Activated CD4-positive, alpha-beta T cell treated with anti-CD3 and anti-CD28 coated beads for 36 hours (primary cell): ENCODE measurements at regions of chr11 and their contacts with region 1.

Region 1: GRCh38 chr11:125887373-125888324 is at the start of gene HYLS1:
- DNase-seq: peak; percentile 97
- ATAC-seq: peak; percentile 90
- H3K4me3 Mint-ChIP-seq: peak within 1 kb of the TSS; percentile 78
- H3K27ac Mint-ChIP-seq: peak within 1 kb of the TSS; percentile 87
- H3K4me1 Mint-ChIP-seq: peaks cover 41% of the 10 kb centered on the region
- H3K27me3 Mint-ChIP-seq: no peaks in the 10 kb centered on the region
- total RNA-seq, gene HYLS1: 7.2 to 9.3 TPM

Region 2: GRCh38 chr11:124875943-124876817 is 1011.5 kb before region 1 on chr11:
- CTCF ChIA-PET with region 1: no interaction called
- POLR2A ChIA-PET with region 1: no interaction called
- intact Hi-C with region 1: loop called in 1 of 2 experiments (anchors 5 kb)
- DNase-seq: peak; percentile 88
- ATAC-seq: peak; percentile 98
- H3K4me3 Mint-ChIP-seq: peak overlapping the region; percentile 77
- H3K27ac Mint-ChIP-seq: peak overlapping the region; percentile 58
- H3K4me1 Mint-ChIP-seq: peaks cover 16% of the 10 kb centered on the region
- H3K27me3 Mint-ChIP-seq: peaks cover 27% of the 10 kb centered on the region

Region 3: DNA sequence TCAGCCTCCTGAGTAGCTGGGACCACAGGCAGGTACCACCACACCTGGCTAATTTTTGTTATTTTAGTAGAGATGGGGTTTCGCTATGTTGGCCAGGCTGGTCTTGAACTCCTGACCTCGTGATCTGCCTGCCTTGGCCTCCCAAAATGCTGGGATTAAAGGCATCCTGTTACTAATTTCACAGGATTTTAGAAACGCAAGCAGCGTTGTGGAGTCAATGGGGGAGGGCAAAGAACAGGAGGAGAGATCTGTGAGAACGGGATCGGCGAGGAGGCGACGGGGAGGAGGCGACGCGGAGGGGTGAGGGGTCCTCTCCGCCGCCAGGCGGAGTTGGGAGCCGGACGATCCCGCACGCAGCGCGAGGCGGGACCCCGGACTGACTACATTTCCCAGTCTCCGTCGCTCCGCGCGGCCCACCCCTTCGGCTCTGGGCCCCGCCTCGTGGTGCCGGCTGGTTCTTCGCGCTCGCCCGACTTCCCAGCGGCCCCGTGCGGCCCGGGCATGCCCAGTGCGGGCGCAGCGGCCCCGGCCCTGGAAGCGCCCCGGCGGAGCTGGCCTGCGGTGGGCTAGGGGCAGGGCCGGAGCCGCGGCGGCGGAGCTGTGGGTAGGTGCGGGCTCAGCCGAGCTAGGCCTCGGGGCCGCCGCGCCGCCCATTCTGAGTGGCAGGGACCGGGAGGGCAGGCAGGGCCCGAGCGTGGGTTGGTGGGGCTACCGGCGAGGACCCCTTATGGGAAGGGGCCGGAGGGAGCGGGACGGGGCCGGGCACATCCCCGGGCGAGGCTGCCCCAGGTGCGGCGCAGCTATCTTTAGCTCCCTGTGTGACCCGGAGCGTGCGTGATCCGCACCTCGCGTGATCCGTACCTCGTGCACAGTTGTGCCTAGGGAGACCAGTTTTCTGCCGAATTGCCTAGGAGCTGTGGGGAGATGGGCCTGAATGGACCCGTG is 318.4 kb before region 1 on chr11 and contains the start of gene EI24:
- CTCF ChIA-PET with region 1: no interaction called
- POLR2A ChIA-PET with region 1: interaction called, 12 read pairs
- intact Hi-C with region 1: loop called in 1 of 2 experiments (anchors 1 kb)
- DNase-seq: peak; percentile 95
- ATAC-seq: peak; percentile 95
- H3K4me3 Mint-ChIP-seq: peak within 1 kb of the TSS; percentile 92
- H3K27ac Mint-ChIP-seq: peak within 1 kb of the TSS; percentile 93
- H3K4me1 Mint-ChIP-seq: peaks cover 24% of the 10 kb centered on the region
- H3K27me3 Mint-ChIP-seq: no peaks in the 10 kb centered on the region
- total RNA-seq, gene EI24: 36.3 to 36.6 TPM

Region 4: GRCh38 chr11:125902927-125903710 is 15.5 kb after region 1 on chr11 and contains the start of gene PUS3:
- CTCF ChIA-PET with region 1: interaction called, 14 read pairs
- POLR2A ChIA-PET with region 1: interaction called, 23 read pairs
- intact Hi-C with region 1: loop called (anchors 1 kb)
- DNase-seq: peak; percentile 94
- ATAC-seq: peak; percentile 97
- H3K4me3 Mint-ChIP-seq: peak within 1 kb of the TSS; percentile 95
- H3K27ac Mint-ChIP-seq: peak within 1 kb of the TSS; percentile 97
- H3K4me1 Mint-ChIP-seq: peaks cover 35% of the 10 kb centered on the region
- H3K27me3 Mint-ChIP-seq: peaks cover 17% of the 10 kb centered on the region
- total RNA-seq, gene PUS3: 14.3 to 19.9 TPM

Region 5: GRCh38 chr11:126282736-126283591 is 395.3 kb after region 1 on chr11 and contains the start of gene TIRAP:
- CTCF ChIA-PET with region 1: no interaction called
- POLR2A ChIA-PET with region 1: no interaction called
- intact Hi-C with region 1: loop called in 1 of 2 experiments (anchors 1 kb)
- DNase-seq: peak; percentile 76
- ATAC-seq: peak; percentile 53
- H3K4me3 Mint-ChIP-seq: peak within 1 kb of the TSS; percentile 81
- H3K27ac Mint-ChIP-seq: peak within 1 kb of the TSS; percentile 94
- H3K4me1 Mint-ChIP-seq: peaks cover 46% of the 10 kb centered on the region
- H3K27me3 Mint-ChIP-seq: no peaks in the 10 kb centered on the region
- total RNA-seq, gene TIRAP: 5.3 to 7.5 TPM